Esophagus squamous epithelium (tissue), 5 donors: ENCODE measurements at regions of chr6 and their contacts with region 1.

Region 1: DNA sequence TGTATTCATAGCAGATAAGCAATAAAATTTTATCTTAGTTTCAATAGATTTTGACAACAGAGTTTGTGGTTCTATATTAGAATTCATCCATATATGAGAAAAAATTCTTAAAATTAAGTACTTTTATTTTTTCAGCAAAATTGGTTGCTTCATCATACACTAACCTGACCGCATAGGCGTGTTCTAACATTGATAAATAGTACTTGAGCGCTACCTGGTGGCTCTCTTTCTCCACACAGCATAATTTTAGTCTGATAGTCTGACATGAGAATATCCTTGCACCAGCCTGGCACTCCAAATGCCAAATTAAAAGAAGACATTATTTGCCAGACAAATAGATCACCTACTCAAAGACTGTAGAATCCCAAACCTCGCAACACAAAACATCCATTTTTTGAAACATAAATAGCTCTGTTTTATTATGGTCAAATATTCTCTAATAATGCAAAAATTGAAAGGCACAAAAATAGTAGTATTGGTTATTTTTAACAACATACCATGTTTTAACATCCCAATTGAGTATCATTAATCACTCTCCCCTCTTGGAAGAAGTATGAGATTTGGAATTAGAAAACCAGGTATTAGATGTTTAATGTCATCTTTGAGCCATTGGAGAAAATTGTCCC is 33.0 kb upstream of the FILIP1 start:
- DNase-seq: no peak
- H3K4me3 ChIP-seq: no peak overlapping the region
- H3K27ac ChIP-seq: no peak overlapping the region
- H3K4me1 ChIP-seq: peaks cover 0 to 13% (median 0%) of the 10 kb centered on the region in 3 donors
- H3K27me3 ChIP-seq: no peaks in the 10 kb centered on the region
- CTCF ChIP-seq: peak; percentile 34 to 84 (median 70)
- POLR2A ChIP-seq: no peak

Region 2: DNA sequence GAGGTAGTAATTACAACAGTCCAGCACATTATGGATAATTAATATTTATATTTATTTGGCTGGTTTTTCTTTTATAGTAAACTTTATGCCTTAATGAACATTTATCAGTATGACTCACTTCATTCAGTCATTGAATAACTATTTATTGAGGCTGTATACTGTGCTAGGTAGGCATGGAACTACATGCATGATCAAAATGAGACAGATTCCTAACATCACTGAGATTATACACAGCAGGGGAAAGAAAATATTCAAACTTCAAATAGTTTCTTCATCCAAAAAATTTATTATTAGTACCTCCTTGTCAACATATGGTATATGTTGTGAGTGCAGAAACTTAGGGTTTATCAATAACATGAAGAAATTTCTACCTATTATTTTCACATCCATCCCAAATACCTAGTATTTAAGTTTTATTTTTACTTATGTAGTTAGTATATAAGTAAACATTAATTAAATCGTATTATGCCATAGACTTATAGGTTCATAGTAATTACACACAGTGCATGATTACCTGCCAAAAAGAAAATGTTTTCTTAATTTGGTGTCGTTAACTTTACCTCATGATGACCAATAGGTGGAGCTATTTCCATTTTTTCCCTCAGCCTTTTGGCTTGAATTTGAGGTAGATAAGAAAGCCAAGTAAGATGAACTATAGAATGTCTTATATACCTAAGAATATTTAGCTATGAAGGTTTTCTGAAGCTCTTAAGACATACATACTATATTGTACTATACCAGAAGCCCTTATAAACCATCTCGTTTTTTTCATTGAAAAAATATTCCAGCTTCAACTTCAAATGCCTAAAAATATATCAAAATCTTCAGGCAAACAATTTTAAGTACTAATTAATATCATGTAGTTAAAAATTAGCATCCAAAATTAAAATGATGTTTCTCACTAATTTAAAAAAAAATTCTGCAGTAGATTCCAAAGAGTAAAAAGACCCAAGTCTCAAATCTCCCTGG is 229.5 kb before region 1 on chr6:
- intact Hi-C with region 1: loop called (anchors 10 kb)
- DNase-seq: no peak
- H3K4me3 ChIP-seq: no peak overlapping the region
- H3K27ac ChIP-seq: no peak overlapping the region
- H3K4me1 ChIP-seq: peaks cover 0 to 17% (median 3%) of the 10 kb centered on the region in 3 donors
- H3K27me3 ChIP-seq: no peaks in the 10 kb centered on the region
- CTCF ChIP-seq: peak; percentile 52 to 76 (median 68)
- POLR2A ChIP-seq: no peak

Region 3: GRCh38 chr6:75748743-75749501 is 222.3 kb after region 1 on chr6 and contains the start of gene MYO6:
- intact Hi-C with region 1: no loop called
- DNase-seq: peak; percentile 4
- H3K4me3 ChIP-seq: peak within 1 kb of the TSS; percentile 86 to 95 (median 92)
- H3K27ac ChIP-seq: peak within 1 kb of the TSS; percentile 92 to 95 (median 94)
- H3K4me1 ChIP-seq: peaks cover 4 to 59% (median 12%) of the 10 kb centered on the region in 3 donors
- H3K27me3 ChIP-seq: peaks cover 0 to 6% (median 0%) of the 10 kb centered on the region in 4 donors
- CTCF ChIP-seq: no peak
- POLR2A ChIP-seq: peak in 2 of 4 donors; percentile 81 to 84
- total RNA-seq, gene MYO6: 22.1 to 37.0 (median 31.5) TPM